Panc1 (cell line): ENCODE measurements at regions of chr12 and their contacts with region 1.

Region 1: DNA sequence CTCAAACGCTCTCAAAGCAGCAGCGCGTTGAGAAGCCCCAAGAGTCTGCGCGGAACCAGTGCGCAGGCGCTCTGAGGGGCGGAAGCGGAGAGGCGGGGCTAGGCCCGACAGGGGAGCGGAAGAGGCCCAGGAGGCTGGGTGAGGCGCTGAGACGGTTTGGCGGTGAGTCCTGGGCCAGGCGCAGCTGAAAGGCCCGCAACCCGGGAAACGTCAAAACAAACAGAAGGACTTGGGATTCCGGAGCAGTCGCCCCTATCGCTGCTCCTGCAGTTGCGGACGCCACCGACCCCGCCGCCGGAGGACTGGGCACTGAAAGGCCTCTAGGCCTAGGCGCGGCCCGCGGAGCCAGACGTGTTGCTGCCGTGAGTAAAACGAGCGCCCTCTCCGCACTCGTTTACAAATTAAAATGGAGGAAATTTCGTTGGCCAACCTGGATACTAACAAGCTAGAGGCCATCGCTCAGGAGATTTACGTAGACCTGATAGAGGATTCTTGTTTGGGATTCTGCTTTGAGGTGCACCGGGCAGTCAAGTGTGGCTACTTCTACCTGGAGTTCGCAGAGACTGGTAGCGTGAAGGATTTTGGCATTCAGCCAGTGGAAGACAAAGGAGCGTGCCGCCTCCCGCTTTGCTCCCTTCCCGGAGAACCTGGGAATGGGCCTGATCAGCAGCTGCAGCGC is at the start of gene ATXN7L3B:
- DNase-seq: peak; percentile 80
- ATAC-seq: peak; percentile 99
- H3K4me3 ChIP-seq: peak within 1 kb of the TSS; percentile 82 to 99
- H3K27ac ChIP-seq: peak within 1 kb of the TSS; percentile 86
- H3K4me1 ChIP-seq: peaks cover 21% of the 10 kb centered on the region
- H3K27me3 ChIP-seq: no peaks in the 10 kb centered on the region; the same call in 1 of the 2 replicates
- CTCF ChIP-seq: no peak
- total RNA-seq, gene ATXN7L3B: 18.0 TPM

Region 2: GRCh38 chr12:73445658-73446324 is 1092.1 kb before region 1 on chr12:
- CTCF ChIA-PET with region 1: no interaction called
- POLR2A ChIA-PET with region 1: no interaction called
- in situ Hi-C with region 1: no loop called
- intact Hi-C with region 1: no loop called
- DNase-seq: no peak
- ATAC-seq: no peak
- H3K4me3 ChIP-seq: no peak overlapping the region
- H3K27ac ChIP-seq: no peak overlapping the region
- H3K4me1 ChIP-seq: no peaks in the 10 kb centered on the region
- H3K27me3 ChIP-seq: no peaks in the 10 kb centered on the region
- CTCF ChIP-seq: no peak

Region 3: GRCh38 chr12:74526535-74526934 is 11.3 kb before region 1 on chr12:
- CTCF ChIA-PET with region 1: no interaction called
- POLR2A ChIA-PET with region 1: no interaction called
- in situ Hi-C with region 1: no loop called
- intact Hi-C with region 1: no loop called
- DNase-seq: no peak
- ATAC-seq: no peak
- H3K4me3 ChIP-seq: no peak overlapping the region
- H3K27ac ChIP-seq: no peak overlapping the region
- H3K4me1 ChIP-seq: no peaks in the 10 kb centered on the region
- H3K27me3 ChIP-seq: no peaks in the 10 kb centered on the region; the same call in 1 of the 2 replicates
- CTCF ChIP-seq: no peak

Region 4: GRCh38 chr12:74586251-74586650 is 48.4 kb after region 1 on chr12:
- CTCF ChIA-PET with region 1: interaction called, 3 read pairs
- POLR2A ChIA-PET with region 1: interaction called, 10 read pairs
- in situ Hi-C with region 1: no loop called
- intact Hi-C with region 1: no loop called
- DNase-seq: no peak
- ATAC-seq: no peak
- H3K4me3 ChIP-seq: no peak overlapping the region
- H3K27ac ChIP-seq: no peak overlapping the region
- H3K4me1 ChIP-seq: no peaks in the 10 kb centered on the region
- H3K27me3 ChIP-seq: no peaks in the 10 kb centered on the region
- CTCF ChIP-seq: no peak